GM18951 (cell line): ENCODE measurements at regions of chr1 and their contacts with region 1.

Region 1: DNA sequence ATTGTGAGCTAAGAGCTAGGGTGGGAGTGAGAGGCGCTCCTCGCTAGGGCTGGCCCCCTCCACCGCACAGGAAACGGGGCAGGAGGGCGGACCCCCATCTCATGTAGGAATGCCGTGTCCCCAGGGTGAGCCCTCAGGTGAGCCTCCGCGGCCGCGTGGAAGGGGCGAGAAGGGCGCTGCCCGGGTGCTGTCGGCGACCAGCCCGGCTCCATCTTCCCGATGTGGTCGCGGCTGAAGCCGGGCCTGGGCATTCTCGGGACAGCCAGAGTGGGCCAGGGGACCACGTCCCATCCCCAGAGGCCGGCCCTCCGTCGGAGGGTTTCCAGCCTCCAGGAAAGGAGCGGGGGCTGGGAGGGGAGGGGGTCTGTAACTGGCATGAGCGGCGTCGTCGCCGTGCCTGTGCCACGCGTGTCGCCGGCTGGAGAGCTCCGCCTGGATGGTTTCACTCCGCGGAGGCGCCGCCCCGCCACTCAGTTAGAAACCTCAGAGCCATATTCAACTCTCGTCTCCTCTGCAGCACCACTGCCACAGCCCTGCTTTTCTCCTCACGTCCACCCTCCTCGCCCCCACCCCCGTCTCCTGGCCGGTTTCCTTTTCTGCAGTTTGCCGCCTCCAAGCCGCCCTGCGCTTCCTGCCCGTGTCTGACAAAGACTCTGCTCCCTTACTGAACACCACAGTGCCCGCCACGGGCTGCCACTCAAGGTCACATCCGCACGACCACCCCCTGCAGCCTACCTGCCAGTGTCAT is at the start of gene TMEM269:
- POLR2A ChIP-seq: peak; percentile 15

Region 2: GRCh38 chr1:42913426-42914091 is 128.4 kb after region 1 on chr1:
- in situ Hi-C with region 1: loop called (anchors 10 kb)
- POLR2A ChIP-seq: no peak